ENCODE measurements at regions of chr10 and their contacts with region 1.

Region 1: DNA sequence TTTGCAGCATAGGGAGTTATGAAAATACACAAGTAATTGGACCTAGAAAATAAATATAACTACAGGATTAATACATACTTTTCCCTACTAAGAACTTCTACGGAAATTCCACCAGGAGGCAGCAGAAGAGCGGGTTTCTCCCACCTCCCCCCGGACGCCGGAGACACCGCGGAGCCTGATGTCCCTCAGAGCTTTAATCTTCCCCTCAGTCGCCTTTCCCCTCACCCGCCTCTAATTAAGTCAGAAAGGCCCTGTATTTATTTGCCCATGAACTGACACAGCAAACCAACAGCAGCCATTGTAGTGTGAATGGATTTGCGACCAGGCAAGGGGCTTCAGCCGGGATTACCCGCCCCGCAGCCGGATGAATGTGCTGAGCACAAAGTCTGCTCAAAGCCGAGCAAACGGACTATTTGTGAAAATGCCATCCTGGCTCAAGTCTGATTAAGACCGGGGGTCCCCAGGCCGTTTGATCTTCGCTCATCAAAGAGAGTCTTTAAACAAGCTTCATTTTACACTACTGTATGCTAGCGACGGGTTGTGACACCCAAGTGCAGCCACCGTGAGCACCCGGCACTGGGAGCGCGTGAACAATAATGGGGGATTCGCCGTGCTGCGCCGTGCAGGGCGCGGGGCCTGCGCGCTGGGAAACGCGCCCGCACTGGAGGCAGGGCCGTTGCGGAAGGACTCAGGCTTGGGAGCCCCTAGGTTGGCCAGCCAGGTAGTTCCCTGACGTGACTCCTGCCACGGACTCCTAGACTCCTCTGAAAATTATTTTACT is 5.6 kb upstream of the DKK1 start:
- DNase-seq: no peak
- ATAC-seq: peak; percentile 76
- H3K4me3 ChIP-seq: no peak overlapping the region
- H3K27ac ChIP-seq: no peak overlapping the region
- H3K4me1 ChIP-seq: no peaks in the 10 kb centered on the region
- H3K27me3 ChIP-seq: peaks cover 0 to 5% of the 10 kb centered on the region in 2 experiments; a peak in 3 of 4 replicates
- CTCF ChIP-seq: peak; percentile 36 to 52 (median 49); a peak in 5 of 6 replicates
- EP300 ChIP-seq: no peak
- POLR2A ChIP-seq: no peak
- RAD21 ChIP-seq: peak; percentile 70

Region 2: DNA sequence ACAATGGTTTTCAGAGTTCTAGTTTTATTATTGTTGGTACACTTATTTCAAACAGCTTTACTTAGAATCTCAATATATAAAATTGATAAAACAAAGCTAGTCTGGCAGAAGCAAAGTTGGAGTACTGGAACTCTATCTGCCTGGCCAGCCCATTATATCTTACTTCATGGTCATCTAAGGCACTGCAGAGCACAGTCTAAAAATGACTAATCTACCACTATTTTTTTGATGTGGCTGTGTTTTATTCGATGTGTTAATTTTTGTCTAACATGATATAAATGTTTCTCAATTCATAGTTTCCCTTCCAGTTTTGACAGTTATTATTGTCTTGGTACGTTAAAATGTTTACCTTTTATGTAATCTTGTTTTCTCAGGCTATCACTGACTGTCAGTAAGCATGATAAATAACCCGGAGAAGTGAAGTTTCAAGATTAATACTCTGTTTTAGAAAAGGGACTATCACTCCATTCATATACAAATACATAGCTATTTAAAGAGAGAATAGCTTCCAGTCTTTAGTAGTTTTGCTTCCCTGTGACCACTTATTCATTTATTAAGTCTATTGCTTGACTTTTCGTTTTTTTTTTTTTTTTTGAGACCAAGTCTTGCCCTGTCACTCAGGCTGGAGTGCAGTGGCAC is 548.4 kb before region 1 on chr10:
- CTCF ChIA-PET with region 1: no interaction called
- POLR2A ChIA-PET with region 1: no interaction called
- RAD21 ChIA-PET with region 1: no interaction called
- SMC1A ChIA-PET with region 1: no interaction called
- in situ Hi-C with region 1: no loop called
- intact Hi-C with region 1: no loop called
- DNase-seq: no peak
- ATAC-seq: peak; percentile 74
- H3K4me3 ChIP-seq: no peak overlapping the region
- H3K27ac ChIP-seq: no peak overlapping the region
- H3K4me1 ChIP-seq: no peaks in the 10 kb centered on the region
- H3K27me3 ChIP-seq: no peaks in the 10 kb centered on the region
- CTCF ChIP-seq: no peak
- EP300 ChIP-seq: no peak
- POLR2A ChIP-seq: no peak
- RAD21 ChIP-seq: no peak

Region 3: DNA sequence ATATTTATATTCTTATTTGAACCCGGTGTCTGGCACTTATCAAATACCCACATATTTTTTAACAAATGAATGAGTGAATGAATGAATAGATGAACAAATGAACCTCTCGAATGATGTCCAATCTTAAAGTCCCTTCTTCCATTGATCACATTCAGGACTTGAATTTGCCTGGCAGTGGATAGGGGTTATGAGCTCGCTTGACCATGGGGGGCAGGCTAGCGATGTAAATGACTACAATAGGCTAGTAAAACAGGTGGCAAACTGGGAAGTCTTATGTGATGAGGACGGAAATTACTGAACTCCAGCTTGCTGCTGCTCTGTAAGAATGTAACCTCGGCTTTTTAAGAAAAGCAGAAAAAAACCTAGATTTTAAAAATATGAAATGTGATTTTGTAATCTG is 242.1 kb before region 1 on chr10:
- CTCF ChIA-PET with region 1: no interaction called
- POLR2A ChIA-PET with region 1: no interaction called
- RAD21 ChIA-PET with region 1: no interaction called
- SMC1A ChIA-PET with region 1: no interaction called
- in situ Hi-C with region 1: no loop called
- intact Hi-C with region 1: no loop called
- DNase-seq: no peak
- ATAC-seq: 0 out of 3 replicates have a peak, but pooled peaks have one; percentile 38
- H3K4me3 ChIP-seq: no peak overlapping the region
- H3K27ac ChIP-seq: no peak overlapping the region
- H3K4me1 ChIP-seq: no peaks in the 10 kb centered on the region
- H3K27me3 ChIP-seq: no peaks in the 10 kb centered on the region
- CTCF ChIP-seq: 0 out of 6 replicates have a peak, but pooled peaks of 1 of the 3 experiments have one; percentile 7
- EP300 ChIP-seq: no peak
- POLR2A ChIP-seq: no peak
- RAD21 ChIP-seq: no peak

Region 4: GRCh38 chr10:52170776-52171175 is 137.7 kb before region 1 on chr10:
- CTCF ChIA-PET with region 1: no interaction called
- POLR2A ChIA-PET with region 1: no interaction called
- RAD21 ChIA-PET with region 1: no interaction called
- SMC1A ChIA-PET with region 1: no interaction called
- in situ Hi-C with region 1: no loop called
- intact Hi-C with region 1: no loop called
- DNase-seq: no peak
- ATAC-seq: no peak
- H3K4me3 ChIP-seq: no peak overlapping the region
- H3K27ac ChIP-seq: no peak overlapping the region
- H3K4me1 ChIP-seq: no peaks in the 10 kb centered on the region
- H3K27me3 ChIP-seq: no peaks in the 10 kb centered on the region
- CTCF ChIP-seq: no peak
- EP300 ChIP-seq: no peak
- POLR2A ChIP-seq: no peak
- RAD21 ChIP-seq: no peak

Region 5: GRCh38 chr10:52343439-52343838 is 35.0 kb after region 1 on chr10:
- CTCF ChIA-PET with region 1: no interaction called
- POLR2A ChIA-PET with region 1: no interaction called
- RAD21 ChIA-PET with region 1: no interaction called
- SMC1A ChIA-PET with region 1: no interaction called
- in situ Hi-C with region 1: no loop called
- intact Hi-C with region 1: no loop called
- DNase-seq: no peak
- ATAC-seq: no peak
- H3K4me3 ChIP-seq: no peak overlapping the region
- H3K27ac ChIP-seq: no peak overlapping the region
- H3K4me1 ChIP-seq: no peaks in the 10 kb centered on the region
- H3K27me3 ChIP-seq: no peaks in the 10 kb centered on the region
- CTCF ChIP-seq: no peak
- EP300 ChIP-seq: no peak
- POLR2A ChIP-seq: no peak
- RAD21 ChIP-seq: no peak

Region 6: GRCh38 chr10:52488606-52489485 is 180.4 kb after region 1 on chr10:
- CTCF ChIA-PET with region 1: interaction called, 61 read pairs
- POLR2A ChIA-PET with region 1: no interaction called
- RAD21 ChIA-PET with region 1: interaction called, 4 read pairs
- SMC1A ChIA-PET with region 1: interaction called, 7 read pairs
- in situ Hi-C with region 1: loop called (anchors 10 kb)
- intact Hi-C with region 1: loop called (anchors 1 kb)
- DNase-seq: no peak
- ATAC-seq: 0 out of 3 replicates have a peak, but pooled peaks have one; percentile 27
- H3K4me3 ChIP-seq: no peak overlapping the region
- H3K27ac ChIP-seq: no peak overlapping the region
- H3K4me1 ChIP-seq: no peaks in the 10 kb centered on the region
- H3K27me3 ChIP-seq: no peaks in the 10 kb centered on the region
- CTCF ChIP-seq: peak; percentile 17 to 41 (median 36); a peak in 5 of 6 replicates
- EP300 ChIP-seq: no peak
- POLR2A ChIP-seq: no peak
- RAD21 ChIP-seq: peak; percentile 46

Region 7: DNA sequence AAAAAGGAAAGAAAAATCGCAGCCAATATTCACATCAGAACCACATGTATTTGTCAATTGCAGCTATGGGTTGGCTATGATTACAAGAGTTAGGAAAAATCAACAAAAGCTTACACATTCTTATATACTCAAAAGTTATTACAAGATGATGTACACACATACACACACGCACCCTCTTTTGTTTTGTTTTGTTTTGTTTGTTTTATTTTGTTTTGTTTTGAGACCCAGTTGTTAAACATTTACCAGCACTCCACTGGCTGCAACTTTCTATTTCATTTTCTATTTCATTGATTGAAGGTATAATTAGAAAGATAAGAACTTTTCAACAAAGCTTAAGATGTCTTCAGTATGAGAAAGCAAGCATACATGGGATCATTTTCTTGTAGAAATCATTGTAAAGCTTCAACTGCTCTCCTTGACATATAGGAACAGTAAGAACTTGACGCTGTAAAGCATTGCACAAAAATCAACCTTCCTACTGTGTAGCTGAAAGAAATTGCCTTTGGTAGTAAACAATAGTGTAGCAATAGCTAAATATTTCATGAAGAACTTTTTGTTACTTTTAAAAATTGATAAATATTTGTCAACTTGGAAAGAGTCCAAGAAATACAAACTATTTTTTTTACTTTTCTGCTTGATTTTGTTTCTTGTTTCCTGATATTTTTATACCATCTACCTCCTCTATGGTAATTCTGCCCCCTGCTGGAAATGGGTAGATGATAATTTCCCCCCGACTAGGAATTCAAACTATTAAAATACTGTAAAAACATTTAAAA is 258.2 kb after region 1 on chr10:
- CTCF ChIA-PET with region 1: interaction called, 16 read pairs
- POLR2A ChIA-PET with region 1: no interaction called
- RAD21 ChIA-PET with region 1: interaction called, 9 read pairs
- SMC1A ChIA-PET with region 1: interaction called, 7 read pairs
- in situ Hi-C with region 1: no loop called
- intact Hi-C with region 1: loop called (anchors 2 kb)
- DNase-seq: no peak
- ATAC-seq: no peak
- H3K4me3 ChIP-seq: no peak overlapping the region
- H3K27ac ChIP-seq: no peak overlapping the region
- H3K4me1 ChIP-seq: no peaks in the 10 kb centered on the region
- H3K27me3 ChIP-seq: no peaks in the 10 kb centered on the region
- CTCF ChIP-seq: peak in 2 of 3 experiments; percentile 16 to 28; a peak in 2 of 6 replicates
- EP300 ChIP-seq: no peak
- POLR2A ChIP-seq: no peak
- RAD21 ChIP-seq: peak; percentile 40

Region 8: DNA sequence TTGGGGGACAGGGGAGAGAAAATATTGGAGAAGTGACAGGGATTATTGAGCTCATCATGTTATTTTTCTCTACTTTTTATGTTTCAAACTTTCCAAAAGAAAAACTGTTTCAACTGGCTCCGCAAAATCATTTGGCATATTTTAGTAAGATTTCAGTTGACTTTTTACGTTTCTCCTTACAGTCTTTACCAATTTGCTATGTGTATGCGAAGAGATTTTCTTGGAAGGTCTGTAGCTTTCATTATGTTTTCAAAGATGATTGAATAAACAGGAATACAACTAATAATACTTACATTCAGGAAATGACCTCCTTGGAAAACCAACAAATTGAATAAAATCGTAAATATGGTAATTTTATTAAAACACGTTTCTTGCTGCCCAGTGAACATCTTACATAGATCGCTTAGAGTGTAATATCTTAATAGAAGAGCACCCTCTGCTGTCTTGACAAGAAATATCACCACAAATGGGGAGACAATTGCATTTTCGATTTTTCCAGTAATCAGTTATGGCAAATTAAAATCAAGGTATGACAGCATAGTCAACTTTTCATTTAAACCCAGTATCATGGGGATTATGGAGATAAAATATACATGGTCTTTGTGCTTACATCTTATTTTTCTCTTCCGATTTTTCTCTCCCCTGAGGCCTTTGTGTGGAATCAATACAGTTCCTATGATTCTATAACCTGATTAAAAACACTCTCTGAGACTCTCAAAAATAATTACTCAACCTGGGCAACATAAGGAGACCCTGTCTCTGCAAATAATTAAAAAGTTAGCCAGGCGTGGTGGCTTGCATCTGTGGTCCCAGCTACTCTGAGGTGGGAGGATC is 421.0 kb after region 1 on chr10:
- CTCF ChIA-PET with region 1: interaction called, 6 read pairs
- POLR2A ChIA-PET with region 1: no interaction called
- RAD21 ChIA-PET with region 1: no interaction called
- SMC1A ChIA-PET with region 1: interaction called, 3 read pairs
- in situ Hi-C with region 1: no loop called
- intact Hi-C with region 1: loop called (anchors 5 kb)
- DNase-seq: no peak
- ATAC-seq: peak; percentile 68
- H3K4me3 ChIP-seq: no peak overlapping the region
- H3K27ac ChIP-seq: no peak overlapping the region
- H3K4me1 ChIP-seq: no peaks in the 10 kb centered on the region
- H3K27me3 ChIP-seq: no peaks in the 10 kb centered on the region
- CTCF ChIP-seq: peak; percentile 31 to 54 (median 45); a peak in 5 of 6 replicates
- EP300 ChIP-seq: no peak
- POLR2A ChIP-seq: no peak
- RAD21 ChIP-seq: peak; percentile 72